Calu3 (cell line): ENCODE measurements at regions of chr6 and their contacts with region 1.

Region 1: DNA sequence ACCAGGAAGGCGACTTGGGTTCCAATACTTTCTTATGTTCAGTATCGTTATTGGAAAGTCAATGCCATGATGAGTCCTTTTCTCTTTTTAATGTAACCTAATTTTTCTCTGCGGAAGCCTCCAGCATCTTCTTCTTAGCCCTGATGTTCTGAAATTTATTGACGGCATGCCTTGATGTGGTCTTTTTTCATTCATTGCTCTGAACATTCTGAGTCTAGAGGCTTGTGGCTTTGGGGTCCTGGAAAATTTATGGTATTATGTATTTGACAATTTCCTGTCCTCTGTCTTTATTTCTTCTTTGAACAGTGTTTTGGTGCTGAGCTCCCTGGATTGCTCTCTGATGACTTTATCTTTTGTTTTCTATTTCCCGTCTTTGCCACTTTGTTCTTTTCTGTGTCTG is 28.7 kb upstream of the MAS1 start:
- DNase-seq: no peak
- H3K4me3 Mint-ChIP-seq: no peak overlapping the region
- H3K27ac Mint-ChIP-seq: no peak overlapping the region
- H3K4me1 Mint-ChIP-seq: peaks cover 7% of the 10 kb centered on the region
- H3K27me3 Mint-ChIP-seq: peaks cover 34% of the 10 kb centered on the region
- CTCF ChIP-seq: no peak

Region 2: DNA sequence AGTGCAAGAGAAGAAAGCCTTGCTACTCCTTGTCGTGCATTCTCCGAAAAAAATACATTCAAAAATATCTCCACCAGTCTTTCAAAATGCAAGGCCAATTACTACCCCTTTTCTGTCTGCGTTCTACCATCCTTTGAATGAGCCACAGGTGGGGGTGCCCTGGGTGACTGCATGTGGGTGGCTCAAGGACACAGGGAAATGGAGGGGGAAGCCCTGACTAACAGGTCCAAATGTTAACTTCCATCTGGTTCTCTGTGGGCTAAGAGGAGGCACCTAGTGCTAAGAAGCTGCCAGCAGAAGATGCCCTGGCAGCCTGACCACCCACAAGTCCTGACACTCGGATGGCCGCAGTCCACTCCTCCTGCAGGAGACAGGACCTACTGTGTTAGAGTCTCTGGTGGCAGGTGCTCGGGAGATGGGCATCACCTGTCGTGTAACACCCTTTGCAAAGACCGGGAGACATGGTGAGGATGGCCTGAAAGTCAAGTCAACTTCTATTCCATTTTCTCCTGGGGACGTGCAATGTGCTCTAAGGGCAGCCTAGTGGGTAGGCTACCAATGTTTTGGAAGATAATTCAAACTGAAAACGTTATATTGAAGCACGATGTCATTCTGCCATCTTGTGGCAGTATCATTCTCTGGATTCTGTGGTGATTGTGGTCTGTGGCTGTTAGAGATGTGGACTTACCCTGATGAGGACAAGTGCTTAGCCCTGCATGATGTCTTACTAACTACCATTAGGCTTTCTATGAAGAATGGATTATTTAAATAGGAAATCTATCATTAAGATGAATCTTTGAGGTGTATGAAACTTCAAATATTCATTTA is 79.4 kb after region 1 on chr6:
- CTCF ChIA-PET with region 1: interaction called, 6 read pairs
- intact Hi-C with region 1: loop called (anchors 1 kb)
- DNase-seq: peak; percentile 24
- H3K4me3 Mint-ChIP-seq: no peak overlapping the region
- H3K27ac Mint-ChIP-seq: no peak overlapping the region
- H3K4me1 Mint-ChIP-seq: no peaks in the 10 kb centered on the region
- H3K27me3 Mint-ChIP-seq: peaks cover 24% of the 10 kb centered on the region
- CTCF ChIP-seq: no peak

Region 3: GRCh38 chr6:160041608-160042007 is 179.5 kb after region 1 on chr6:
- CTCF ChIA-PET with region 1: no interaction called
- intact Hi-C with region 1: loop called (anchors 2 kb)
- DNase-seq: peak; percentile 41
- H3K4me3 Mint-ChIP-seq: no peak overlapping the region
- H3K27ac Mint-ChIP-seq: no peak overlapping the region
- H3K4me1 Mint-ChIP-seq: peaks cover 20% of the 10 kb centered on the region
- H3K27me3 Mint-ChIP-seq: no peaks in the 10 kb centered on the region
- CTCF ChIP-seq: no peak

Region 4: GRCh38 chr6:160102956-160103824 is 241.1 kb after region 1 on chr6:
- CTCF ChIA-PET with region 1: interaction called, 3 read pairs
- intact Hi-C with region 1: loop called (anchors 10 kb)
- DNase-seq: peak; percentile 26
- H3K4me3 Mint-ChIP-seq: no peak overlapping the region
- H3K27ac Mint-ChIP-seq: no peak overlapping the region
- H3K4me1 Mint-ChIP-seq: no peaks in the 10 kb centered on the region
- H3K27me3 Mint-ChIP-seq: no peaks in the 10 kb centered on the region
- CTCF ChIP-seq: peak; percentile 37

Region 5: DNA sequence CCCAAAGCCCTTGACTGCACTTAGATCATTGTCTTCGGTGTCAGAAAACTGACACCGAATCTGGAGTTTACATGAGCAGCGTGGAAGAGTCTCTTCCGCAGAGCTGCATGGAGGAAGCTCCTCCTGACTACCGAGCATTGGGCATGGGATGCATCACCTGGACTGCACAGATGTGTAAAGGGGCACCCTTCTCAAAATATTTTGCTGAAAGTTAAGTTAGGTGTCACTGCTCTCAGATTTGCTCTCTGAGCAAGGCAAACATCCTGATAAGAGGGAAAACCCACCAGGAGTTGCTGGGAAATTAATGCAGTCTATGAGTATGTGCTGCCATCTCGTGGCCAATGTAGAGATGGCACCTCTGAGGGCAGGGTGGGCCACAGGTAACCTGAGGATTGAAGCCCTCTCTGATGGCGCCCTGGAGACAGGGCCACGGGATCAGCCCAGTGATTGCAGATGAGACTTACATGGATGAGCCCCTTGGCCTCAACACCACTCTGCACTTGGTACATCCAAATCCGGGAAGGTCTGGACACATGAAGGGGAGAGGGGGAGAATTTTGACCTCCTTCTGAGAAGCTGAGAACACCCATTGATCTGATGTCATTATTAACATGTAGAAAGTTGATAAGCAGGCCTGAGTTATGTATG is 672.1 kb after region 1 on chr6:
- CTCF ChIA-PET with region 1: no interaction called
- intact Hi-C with region 1: loop called (anchors 2 kb)
- DNase-seq: peak; percentile 64
- H3K4me3 Mint-ChIP-seq: no peak overlapping the region
- H3K27ac Mint-ChIP-seq: no peak overlapping the region
- H3K4me1 Mint-ChIP-seq: no peaks in the 10 kb centered on the region
- H3K27me3 Mint-ChIP-seq: no peaks in the 10 kb centered on the region
- CTCF ChIP-seq: peak; percentile 94